ENCODE measurements at regions of chr15 and their contacts with region 1.

Region 1: GRCh38 chr15:63191895-63192618 is 2.7 kb downstream of the RAB8B start:
- DNase-seq: no peak
- H3K4me3 ChIP-seq: no peak overlapping the region
- H3K27ac ChIP-seq: no peak overlapping the region
- H3K4me1 ChIP-seq: peaks cover 0 to 10% (median 8%) of the 10 kb centered on the region in 4 experiments; a peak in 3 of 7 replicates
- H3K27me3 ChIP-seq: no peaks in the 10 kb centered on the region
- CTCF ChIP-seq: no peak
- EP300 ChIP-seq: no peak
- POLR2A ChIP-seq: no peak
- RAD21 ChIP-seq: no peak

Region 2: GRCh38 chr15:62995047-62995674 is 196.9 kb before region 1 on chr15:
- CTCF ChIA-PET with region 1: no interaction called
- POLR2A ChIA-PET with region 1: no interaction called
- DNase-seq: no peak
- H3K4me3 ChIP-seq: no peak overlapping the region
- H3K27ac ChIP-seq: no peak overlapping the region
- H3K4me1 ChIP-seq: peaks cover 0 to 2% (median 0%) of the 10 kb centered on the region in 4 experiments; a peak in 3 of 7 replicates
- H3K27me3 ChIP-seq: no peaks in the 10 kb centered on the region
- CTCF ChIP-seq: no peak
- EP300 ChIP-seq: no peak
- POLR2A ChIP-seq: no peak
- RAD21 ChIP-seq: no peak

Region 3: GRCh38 chr15:63203451-63204090 is 11.5 kb after region 1 on chr15:
- CTCF ChIA-PET with region 1: interaction called, 11 read pairs
- POLR2A ChIA-PET with region 1: interaction called, 3 read pairs
- DNase-seq: no peak
- H3K4me3 ChIP-seq: no peak overlapping the region
- H3K27ac ChIP-seq: no peak overlapping the region
- H3K4me1 ChIP-seq: peaks cover 0 to 2% (median 0%) of the 10 kb centered on the region in 4 experiments; a peak in 1 of 7 replicates
- H3K27me3 ChIP-seq: no peaks in the 10 kb centered on the region
- CTCF ChIP-seq: peak in 1 of 3 experiments; percentile 14; a peak in 1 of 4 replicates
- EP300 ChIP-seq: no peak
- POLR2A ChIP-seq: no peak
- RAD21 ChIP-seq: peak; percentile 34 to 38